Activated B cell treated with CpG ODN at 0.5 μM for 24 hours (primary cell): ENCODE measurements at regions of chr2 and their contacts with region 1.

Region 1: GRCh38 chr2:101623031-101623521 is 74.4 kb upstream of the MAP4K4 start:
- DNase-seq: no peak
- ATAC-seq: peak; percentile 82
- H3K4me3 Mint-ChIP-seq: peak overlapping the region; percentile 69
- H3K27ac Mint-ChIP-seq: peak overlapping the region; percentile 95
- H3K4me1 Mint-ChIP-seq: peaks cover 78% of the 10 kb centered on the region
- H3K27me3 Mint-ChIP-seq: no peaks in the 10 kb centered on the region
- CTCF ChIP-seq: no peak

Region 2: GRCh38 chr2:101400048-101400447 is 223.0 kb before region 1 on chr2:
- CTCF ChIA-PET with region 1: no interaction called
- POLR2A ChIA-PET with region 1: interaction called, 4 read pairs
- intact Hi-C with region 1: loop called (anchors 2 kb)
- DNase-seq: no peak
- ATAC-seq: peak; percentile 30
- H3K4me3 Mint-ChIP-seq: peak overlapping the region; percentile 56
- H3K27ac Mint-ChIP-seq: peak overlapping the region; percentile 84
- H3K4me1 Mint-ChIP-seq: peaks cover 58% of the 10 kb centered on the region
- H3K27me3 Mint-ChIP-seq: peaks cover 5% of the 10 kb centered on the region
- CTCF ChIP-seq: no peak

Region 3: GRCh38 chr2:101558740-101559519 is 64.1 kb before region 1 on chr2:
- CTCF ChIA-PET with region 1: no interaction called
- POLR2A ChIA-PET with region 1: no interaction called
- intact Hi-C with region 1: no loop called
- DNase-seq: no peak
- ATAC-seq: no peak
- H3K4me3 Mint-ChIP-seq: no peak overlapping the region
- H3K27ac Mint-ChIP-seq: no peak overlapping the region
- H3K4me1 Mint-ChIP-seq: peaks cover 7% of the 10 kb centered on the region
- H3K27me3 Mint-ChIP-seq: peaks cover 2% of the 10 kb centered on the region
- CTCF ChIP-seq: no peak

Region 4: GRCh38 chr2:101608408-101609317 is 14.4 kb before region 1 on chr2:
- CTCF ChIA-PET with region 1: no interaction called
- POLR2A ChIA-PET with region 1: interaction called, 27 read pairs
- intact Hi-C with region 1: loop called (anchors 1 kb)
- DNase-seq: no peak
- ATAC-seq: no peak
- H3K4me3 Mint-ChIP-seq: no peak overlapping the region
- H3K27ac Mint-ChIP-seq: no peak overlapping the region
- H3K4me1 Mint-ChIP-seq: peaks cover 28% of the 10 kb centered on the region
- H3K27me3 Mint-ChIP-seq: no peaks in the 10 kb centered on the region
- CTCF ChIP-seq: no peak

Region 5: GRCh38 chr2:101655702-101656422 is 32.8 kb after region 1 on chr2:
- CTCF ChIA-PET with region 1: no interaction called
- POLR2A ChIA-PET with region 1: interaction called, 17 read pairs
- intact Hi-C with region 1: loop called (anchors 1 kb)
- DNase-seq: no peak
- ATAC-seq: no peak
- H3K4me3 Mint-ChIP-seq: no peak overlapping the region
- H3K27ac Mint-ChIP-seq: peak overlapping the region; percentile 41
- H3K4me1 Mint-ChIP-seq: peaks cover 26% of the 10 kb centered on the region
- H3K27me3 Mint-ChIP-seq: no peaks in the 10 kb centered on the region
- CTCF ChIP-seq: no peak

Region 6: DNA sequence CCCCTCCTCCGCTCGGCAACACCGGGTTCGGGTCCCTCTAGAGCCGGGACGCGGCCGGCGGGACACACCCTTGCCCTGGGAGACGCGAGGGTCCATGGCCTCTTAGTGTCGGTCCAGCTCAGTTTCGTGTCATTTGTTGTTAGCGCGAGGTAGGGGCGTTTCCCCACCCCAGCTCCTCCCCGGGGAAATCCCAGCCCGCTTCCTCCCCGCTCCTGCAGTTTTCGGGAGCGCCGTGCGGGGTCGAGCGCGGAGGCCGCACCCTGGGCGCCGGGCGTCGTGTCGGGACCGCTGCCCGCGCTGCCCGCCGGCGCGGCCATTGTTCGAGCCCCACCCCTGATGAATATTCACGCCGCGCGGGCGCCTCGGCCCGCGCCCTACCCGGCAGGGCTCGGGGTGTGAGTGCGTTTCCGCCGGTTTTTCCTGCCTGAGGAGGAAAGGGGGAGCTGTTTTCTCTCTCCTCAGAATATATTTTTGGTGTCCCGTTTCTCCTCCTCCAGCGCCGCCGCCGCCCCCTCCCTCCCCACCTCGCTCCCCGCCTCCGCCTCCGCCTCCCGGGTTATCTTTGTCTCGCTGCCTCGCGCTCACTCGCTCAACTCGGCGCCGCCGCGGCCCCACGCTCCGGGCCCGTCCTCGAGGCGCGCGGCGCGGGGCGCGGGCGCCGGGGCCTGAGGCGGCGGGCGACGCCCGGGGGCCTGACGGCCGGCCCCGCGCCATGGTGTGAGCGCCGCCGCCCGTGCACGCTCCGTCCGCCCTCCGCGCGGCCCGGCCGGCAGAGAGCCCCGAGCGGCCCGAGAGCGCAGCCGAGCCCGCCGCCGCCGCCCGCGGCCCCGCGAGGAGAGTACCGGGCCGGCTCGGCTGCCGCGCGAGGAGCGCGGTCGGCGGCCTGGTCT is 74.3 kb after region 1 on chr2 and contains the start of gene MAP4K4:
- CTCF ChIA-PET with region 1: interaction called, 4 read pairs
- POLR2A ChIA-PET with region 1: interaction called, 106 read pairs
- intact Hi-C with region 1: loop called (anchors 1 kb)
- DNase-seq: peak; percentile 71
- ATAC-seq: peak; percentile 71
- H3K4me3 Mint-ChIP-seq: peak within 1 kb of the TSS; percentile 92
- H3K27ac Mint-ChIP-seq: peak within 1 kb of the TSS; percentile 91
- H3K4me1 Mint-ChIP-seq: peaks cover 8% of the 10 kb centered on the region
- H3K27me3 Mint-ChIP-seq: no peaks in the 10 kb centered on the region
- CTCF ChIP-seq: no peak
- total RNA-seq, gene MAP4K4: 211 and 232 TPM in 2 replicates

Region 7: DNA sequence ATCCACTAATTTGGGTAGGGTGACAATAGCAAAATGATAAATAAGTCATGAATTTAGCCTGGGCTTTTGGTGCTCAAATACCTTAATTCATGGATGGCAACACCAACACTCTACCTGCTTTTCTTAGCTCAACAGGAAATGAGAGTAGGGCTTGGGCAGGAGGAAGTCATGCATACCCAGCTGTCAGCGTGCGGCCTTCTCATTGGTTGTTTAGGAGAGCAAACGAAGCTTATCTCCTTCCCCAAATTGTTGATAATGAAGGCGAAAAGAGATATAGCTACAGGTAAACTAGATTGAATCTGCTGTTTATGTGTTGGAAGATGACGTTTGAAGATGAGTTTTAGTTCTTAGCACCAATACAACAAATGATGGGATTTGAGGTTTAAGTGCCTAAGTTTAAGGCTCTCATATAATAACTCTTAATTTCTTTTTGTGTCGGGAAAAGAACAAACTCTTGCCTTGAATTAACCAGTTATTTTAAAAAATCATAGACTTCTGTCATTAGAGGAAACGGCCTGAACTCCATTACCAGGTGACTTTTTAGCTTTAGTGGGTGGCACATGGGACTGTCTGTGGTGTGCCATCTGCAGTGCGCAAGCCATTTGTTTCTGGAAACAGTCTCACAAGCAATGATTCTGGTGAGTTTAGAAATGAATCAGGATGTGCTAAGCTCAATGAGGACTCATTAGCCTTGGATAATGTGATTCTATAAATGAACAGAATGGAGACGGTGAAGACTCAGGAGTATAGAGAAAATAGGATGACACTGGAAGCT is 94.2 kb after region 1 on chr2:
- CTCF ChIA-PET with region 1: no interaction called
- POLR2A ChIA-PET with region 1: interaction called, 22 read pairs
- intact Hi-C with region 1: loop called (anchors 1 kb)
- DNase-seq: no peak
- ATAC-seq: peak; percentile 82
- H3K4me3 Mint-ChIP-seq: peak overlapping the region; percentile 72
- H3K27ac Mint-ChIP-seq: peak overlapping the region; percentile 94
- H3K4me1 Mint-ChIP-seq: peaks cover 97% of the 10 kb centered on the region
- H3K27me3 Mint-ChIP-seq: no peaks in the 10 kb centered on the region
- CTCF ChIP-seq: no peak

Region 8: DNA sequence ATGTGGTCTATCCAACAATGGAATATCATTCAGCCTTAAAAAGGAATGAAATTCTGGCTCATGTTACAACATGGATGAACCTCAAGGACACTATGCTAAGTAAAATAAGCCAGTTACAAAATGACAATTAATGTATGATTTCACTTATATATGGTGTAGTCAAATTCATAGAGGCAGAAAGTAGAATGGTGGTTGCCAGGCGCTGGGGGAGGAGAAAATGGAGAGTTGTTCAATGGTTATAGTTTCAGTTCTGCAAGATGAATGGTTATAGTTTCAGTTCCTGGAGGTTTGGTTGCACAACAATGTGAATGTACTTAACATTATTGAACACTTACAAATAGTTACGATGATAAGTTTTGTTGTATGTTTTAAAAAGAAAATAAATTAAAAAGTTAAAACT is 289.5 kb after region 1 on chr2:
- CTCF ChIA-PET with region 1: no interaction called
- POLR2A ChIA-PET with region 1: no interaction called
- intact Hi-C with region 1: loop called (anchors 10 kb)
- DNase-seq: no peak
- ATAC-seq: peak; percentile 95
- H3K4me3 Mint-ChIP-seq: peak overlapping the region; percentile 52
- H3K27ac Mint-ChIP-seq: peak overlapping the region; percentile 69
- H3K4me1 Mint-ChIP-seq: peaks cover 49% of the 10 kb centered on the region
- H3K27me3 Mint-ChIP-seq: no peaks in the 10 kb centered on the region
- CTCF ChIP-seq: no peak